ENCODE measurements at regions of chr11 and their contacts with region 1.

Region 1: DNA sequence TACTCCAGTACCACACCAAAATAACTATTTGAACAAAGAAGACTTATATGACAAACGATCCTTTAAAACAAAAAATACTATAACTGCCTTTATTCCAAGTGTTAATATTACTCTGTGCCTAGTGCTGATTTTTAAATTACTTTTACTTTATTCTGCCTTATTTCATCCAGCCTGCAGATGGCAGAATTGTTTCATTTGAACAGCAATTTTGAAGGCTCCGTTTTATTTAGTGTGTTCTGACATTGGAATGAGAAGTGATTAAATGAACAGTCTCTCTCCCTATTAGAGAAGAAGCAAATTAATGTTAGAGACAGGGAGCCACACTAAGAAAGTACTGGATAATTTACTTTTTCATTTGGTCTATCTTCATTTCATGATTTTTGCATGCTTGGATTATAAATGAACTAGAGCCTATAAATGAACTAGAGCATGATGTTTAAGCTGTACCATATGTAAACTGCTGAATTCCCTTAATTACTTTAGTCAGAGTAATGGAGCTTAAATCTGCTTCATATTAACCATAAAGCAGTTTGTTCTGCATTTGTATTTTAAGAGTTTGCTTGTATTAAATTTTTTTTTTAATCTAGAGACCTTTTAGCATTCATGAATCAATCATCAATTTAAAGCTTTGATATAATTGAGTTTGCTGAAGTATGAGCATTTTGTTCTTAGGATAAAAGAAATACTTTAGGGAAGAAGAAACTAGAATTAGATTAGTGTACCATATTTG is 9.8 kb downstream of the PDHX start:
- DNase-seq: peak in 1 of 7 donors; percentile 11
- H3K4me3 ChIP-seq: no peak overlapping the region
- H3K27ac ChIP-seq: no peak overlapping the region
- H3K4me1 ChIP-seq: peaks cover 13 to 38% of the 10 kb centered on the region in 2 donors
- H3K27me3 ChIP-seq: no peaks in the 10 kb centered on the region
- CTCF ChIP-seq: peak; percentile 52 to 89 (median 78)
- POLR2A ChIP-seq: no peak

Region 2: GRCh38 chr11:34798985-34799384 is 127.3 kb before region 1 on chr11:
- intact Hi-C with region 1: no loop called
- DNase-seq: no peak
- H3K4me3 ChIP-seq: no peak overlapping the region
- H3K27ac ChIP-seq: no peak overlapping the region
- H3K4me1 ChIP-seq: no peaks in the 10 kb centered on the region
- H3K27me3 ChIP-seq: no peaks in the 10 kb centered on the region
- CTCF ChIP-seq: no peak
- POLR2A ChIP-seq: no peak

Region 3: GRCh38 chr11:34886609-34887008 is 39.7 kb before region 1 on chr11:
- intact Hi-C with region 1: no loop called
- DNase-seq: no peak
- H3K4me3 ChIP-seq: no peak overlapping the region
- H3K27ac ChIP-seq: no peak overlapping the region
- H3K4me1 ChIP-seq: no peaks in the 10 kb centered on the region
- H3K27me3 ChIP-seq: no peaks in the 10 kb centered on the region
- CTCF ChIP-seq: no peak
- POLR2A ChIP-seq: no peak

Region 4: GRCh38 chr11:35237860-35238715 is 311.8 kb after region 1 on chr11:
- intact Hi-C with region 1: loop called in 1 of 2 experiments (anchors 10 kb)
- DNase-seq: peak; percentile 38 to 78 (median 63)
- H3K4me3 ChIP-seq: no peak overlapping the region
- H3K27ac ChIP-seq: no peak overlapping the region
- H3K4me1 ChIP-seq: peaks cover 0 to 8% of the 10 kb centered on the region in 2 donors
- H3K27me3 ChIP-seq: no peaks in the 10 kb centered on the region
- CTCF ChIP-seq: peak; percentile 68 to 83 (median 76)
- POLR2A ChIP-seq: no peak

Region 5: GRCh38 chr11:35391922-35392813 is 465.9 kb after region 1 on chr11:
- intact Hi-C with region 1: loop called in 1 of 2 experiments (anchors 10 kb)
- DNase-seq: peak; percentile 84 to 92 (median 88)
- H3K4me3 ChIP-seq: no peak overlapping the region
- H3K27ac ChIP-seq: no peak overlapping the region
- H3K4me1 ChIP-seq: peaks cover 5 to 12% of the 10 kb centered on the region in 2 donors
- H3K27me3 ChIP-seq: no peaks in the 10 kb centered on the region
- CTCF ChIP-seq: peak; percentile 79 to 97 (median 92)
- POLR2A ChIP-seq: no peak